CD8-positive, alpha-beta T cell (primary cell): ENCODE measurements at regions of chr3 and their contacts with region 1.

Region 1: DNA sequence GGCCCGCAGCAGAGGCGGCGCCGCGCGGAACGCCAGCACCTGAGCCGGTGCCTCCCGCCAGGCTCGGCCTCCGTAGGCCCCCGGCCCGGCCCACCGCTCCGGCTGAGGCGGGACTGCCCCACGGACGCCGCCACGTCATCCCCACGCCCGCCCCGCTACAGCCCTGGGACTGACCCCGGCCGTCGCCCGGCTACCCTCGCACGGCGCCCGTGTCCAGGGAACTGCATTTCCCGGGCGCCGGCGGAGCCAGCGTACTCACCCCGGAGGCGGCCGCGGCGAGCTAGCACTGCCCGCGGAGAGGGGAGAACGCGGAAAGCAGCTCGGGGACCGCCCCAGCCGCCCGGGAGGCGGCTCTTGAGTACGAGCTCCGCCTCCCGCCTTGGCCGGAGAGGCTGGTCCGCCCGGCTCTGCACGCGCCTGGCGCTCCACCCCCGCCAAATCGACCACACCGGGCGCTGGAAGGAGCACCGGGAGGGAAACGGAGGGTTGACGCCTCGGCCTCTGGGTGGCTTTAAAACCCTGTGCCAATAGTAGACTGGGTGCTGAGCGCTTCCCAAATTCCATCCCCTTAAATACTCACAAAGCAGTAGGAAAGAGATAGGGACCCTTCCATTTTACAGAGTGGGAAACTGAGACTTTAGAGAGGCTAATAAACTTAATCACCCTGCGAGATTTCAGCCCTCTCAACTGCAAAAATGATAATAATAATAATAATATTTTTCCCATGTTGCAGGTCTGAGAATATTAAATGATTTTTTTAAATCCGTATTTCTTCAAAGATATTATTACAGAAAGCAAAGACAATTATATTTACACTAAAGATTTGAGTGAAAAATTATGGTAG is at the start of gene B4GALT4:
- DNase-seq: peak; percentile 34 to 83 (median 63)
- ATAC-seq: peak; percentile 67
- H3K4me3 ChIP-seq: peak within 1 kb of the TSS; percentile 66 to 72
- H3K4me3 Mint-ChIP-seq: peak within 1 kb of the TSS; percentile 88
- H3K27ac ChIP-seq: peak within 1 kb of the TSS; percentile 58 to 67
- H3K27ac Mint-ChIP-seq: peak within 1 kb of the TSS; percentile 92
- H3K4me1 ChIP-seq: peaks cover 30% of the 10 kb centered on the region
- H3K4me1 Mint-ChIP-seq: peaks cover 40% of the 10 kb centered on the region
- H3K27me3 ChIP-seq: no peaks in the 10 kb centered on the region
- H3K27me3 Mint-ChIP-seq: no peaks in the 10 kb centered on the region
- CTCF ChIP-seq: no peak
- total RNA-seq, gene B4GALT4: 18.2 to 18.6 TPM

Region 2: GRCh38 chr3:119098619-119099222 is 142.1 kb before region 1 on chr3:
- CTCF ChIA-PET with region 1: interaction called, 4 read pairs
- POLR2A ChIA-PET with region 1: no interaction called
- intact Hi-C with region 1: loop called (anchors 5 kb)
- DNase-seq: peak in 3 of 9 experiments; percentile 11 to 64 (median 57)
- ATAC-seq: no peak
- H3K4me3 ChIP-seq: no peak overlapping the region
- H3K4me3 Mint-ChIP-seq: no peak overlapping the region
- H3K27ac ChIP-seq: no peak overlapping the region
- H3K27ac Mint-ChIP-seq: no peak overlapping the region
- H3K4me1 ChIP-seq: no peaks in the 10 kb centered on the region
- H3K4me1 Mint-ChIP-seq: no peaks in the 10 kb centered on the region
- H3K27me3 ChIP-seq: no peaks in the 10 kb centered on the region
- H3K27me3 Mint-ChIP-seq: peaks cover 5% of the 10 kb centered on the region
- CTCF ChIP-seq: peak; percentile 90

Region 3: GRCh38 chr3:119145500-119146191 is 95.2 kb before region 1 on chr3 and contains the start of gene TEX55:
- CTCF ChIA-PET with region 1: interaction called, 6 read pairs
- POLR2A ChIA-PET with region 1: interaction called, 3 read pairs
- intact Hi-C with region 1: loop called (anchors 1 to 2 kb)
- DNase-seq: peak in 2 of 9 experiments; percentile 25 to 39
- ATAC-seq: peak; percentile 46
- H3K4me3 ChIP-seq: no peak within 1 kb of the TSS
- H3K4me3 Mint-ChIP-seq: no peak within 1 kb of the TSS
- H3K27ac ChIP-seq: no peak within 1 kb of the TSS
- H3K27ac Mint-ChIP-seq: no peak within 1 kb of the TSS
- H3K4me1 ChIP-seq: no peaks in the 10 kb centered on the region
- H3K4me1 Mint-ChIP-seq: peaks cover 2% of the 10 kb centered on the region
- H3K27me3 ChIP-seq: no peaks in the 10 kb centered on the region
- H3K27me3 Mint-ChIP-seq: no peaks in the 10 kb centered on the region
- CTCF ChIP-seq: peak; percentile 54
- total RNA-seq, gene TEX55: not detected

Region 4: DNA sequence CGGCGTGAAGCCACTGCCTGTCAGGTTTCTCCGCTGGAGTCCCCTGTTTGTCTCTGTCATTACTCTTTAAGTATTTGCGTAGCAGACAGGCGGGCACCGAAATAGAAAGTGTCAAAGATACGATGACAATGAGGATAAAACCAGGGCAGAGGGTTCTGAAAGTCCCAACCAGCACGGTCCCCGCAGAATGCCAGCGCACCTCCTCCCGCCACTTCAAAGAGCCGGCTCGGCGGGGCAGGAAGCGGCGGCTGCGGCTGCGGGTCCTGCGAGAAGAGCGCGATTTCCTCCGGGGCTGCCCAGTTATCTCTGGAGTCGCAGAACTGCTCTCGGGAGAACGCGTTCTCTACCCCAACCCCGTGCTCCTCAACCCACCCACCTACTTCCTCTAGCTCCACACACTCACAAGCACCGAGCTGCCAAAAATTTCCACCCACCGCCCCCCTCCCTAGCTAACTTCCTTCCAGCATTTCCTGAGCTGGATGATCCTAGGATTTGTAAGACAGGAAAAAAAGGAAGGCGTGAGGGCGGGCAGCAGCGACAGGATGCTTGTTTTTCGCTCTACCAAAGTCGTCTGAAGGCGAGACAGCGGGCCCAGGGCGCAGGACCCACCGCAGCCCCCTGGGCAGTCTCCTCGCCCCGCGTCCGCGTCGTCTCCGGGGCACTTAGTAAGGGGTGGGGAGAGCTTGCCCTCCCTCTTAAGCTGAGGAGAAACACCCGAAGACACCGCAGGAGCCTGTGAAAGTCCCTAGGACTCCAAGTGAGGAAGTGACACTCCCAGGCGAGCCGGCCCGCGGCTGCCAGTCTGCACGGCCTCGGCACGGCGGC is 53.3 kb after region 1 on chr3 and contains the start of gene ARHGAP31:
- CTCF ChIA-PET with region 1: interaction called, 9 read pairs
- POLR2A ChIA-PET with region 1: interaction called, 19 read pairs
- intact Hi-C with region 1: loop called (anchors 2 kb)
- DNase-seq: peak; percentile 71 to 96 (median 86)
- ATAC-seq: peak; percentile 64
- H3K4me3 ChIP-seq: peak within 1 kb of the TSS; percentile 61 to 82
- H3K4me3 Mint-ChIP-seq: peak within 1 kb of the TSS; percentile 95
- H3K27ac ChIP-seq: peak within 1 kb of the TSS; percentile 58 to 84
- H3K27ac Mint-ChIP-seq: peak within 1 kb of the TSS; percentile 98
- H3K4me1 ChIP-seq: peaks cover 30% of the 10 kb centered on the region
- H3K4me1 Mint-ChIP-seq: peaks cover 55% of the 10 kb centered on the region
- H3K27me3 ChIP-seq: no peaks in the 10 kb centered on the region
- H3K27me3 Mint-ChIP-seq: no peaks in the 10 kb centered on the region
- CTCF ChIP-seq: no peak
- total RNA-seq, gene ARHGAP31: 1.00 to 1.1 TPM

Region 5: DNA sequence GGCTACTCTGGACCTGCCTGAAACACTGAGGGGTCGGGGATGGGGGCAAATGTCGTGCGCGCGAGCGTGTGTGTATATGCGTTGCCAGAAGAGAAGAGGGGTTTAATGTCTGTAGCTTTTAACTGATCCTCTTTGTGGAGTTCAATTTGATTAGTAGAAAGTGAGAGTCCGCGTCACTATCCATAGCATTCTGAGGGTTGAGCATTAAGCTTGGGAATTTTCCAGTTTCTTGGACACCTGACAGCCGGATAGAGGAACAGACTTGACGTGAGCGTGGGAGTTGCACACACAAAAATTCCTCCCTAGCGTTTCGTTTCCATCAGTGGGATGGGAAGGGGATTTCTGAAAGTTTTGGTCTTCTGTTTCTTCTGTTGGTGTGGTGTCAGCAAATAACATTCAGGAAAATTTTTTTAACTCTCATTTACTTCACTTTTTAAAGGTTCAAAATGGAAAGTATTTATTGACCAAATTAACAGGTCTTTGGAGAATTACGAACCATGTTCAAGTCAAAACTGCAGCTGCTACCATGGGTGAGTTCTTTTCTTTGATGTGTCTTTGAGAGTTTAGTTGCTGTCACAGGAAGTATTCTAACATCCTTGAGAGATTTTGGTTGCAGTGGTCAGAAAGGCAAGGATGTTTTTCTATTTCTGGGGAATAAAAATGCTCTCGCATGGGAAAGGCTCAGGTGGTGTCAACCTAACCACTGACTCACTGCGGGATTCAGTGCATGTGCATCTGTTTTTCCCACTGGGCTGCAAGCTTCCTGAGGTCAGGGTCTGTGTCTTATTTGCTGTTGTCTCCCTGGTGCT is 228.8 kb after region 1 on chr3:
- CTCF ChIA-PET with region 1: interaction called, 4 read pairs
- POLR2A ChIA-PET with region 1: interaction called, 3 read pairs
- intact Hi-C with region 1: loop called in 1 of 2 experiments (anchors 2 kb)
- DNase-seq: peak in 3 of 9 experiments; percentile 20 to 46 (median 22)
- ATAC-seq: peak; percentile 32
- H3K4me3 ChIP-seq: peak overlapping the region; percentile 79 to 84
- H3K4me3 Mint-ChIP-seq: peak overlapping the region; percentile 91
- H3K27ac ChIP-seq: peak overlapping the region; percentile 67 to 72
- H3K27ac Mint-ChIP-seq: peak overlapping the region; percentile 88
- H3K4me1 ChIP-seq: peaks cover 21% of the 10 kb centered on the region
- H3K4me1 Mint-ChIP-seq: peaks cover 33% of the 10 kb centered on the region
- H3K27me3 ChIP-seq: no peaks in the 10 kb centered on the region
- H3K27me3 Mint-ChIP-seq: no peaks in the 10 kb centered on the region
- CTCF ChIP-seq: no peak